T-cell (primary cell): ENCODE measurements at regions of chr3 and their contacts with region 1.

Region 1: GRCh38 chr3:33113772-33114621 is at the start of gene CRTAP:
- DNase-seq: peak; percentile 65 to 91 (median 77)
- ATAC-seq: peak; percentile 86 to 88 (median 88)
- H3K4me3 ChIP-seq: peak within 1 kb of the TSS; percentile 70 to 80
- H3K4me3 Mint-ChIP-seq: peak within 1 kb of the TSS; percentile 81 to 87 (median 83)
- H3K27ac ChIP-seq: peak within 1 kb of the TSS; percentile 62
- H3K27ac Mint-ChIP-seq: peak within 1 kb of the TSS; percentile 85 to 91
- H3K4me1 ChIP-seq: peaks cover 5 to 18% of the 10 kb centered on the region in 2 experiments
- H3K4me1 Mint-ChIP-seq: peaks cover 36 to 56% (median 53%) of the 10 kb centered on the region in 3 donors
- H3K27me3 ChIP-seq: no peaks in the 10 kb centered on the region
- H3K27me3 Mint-ChIP-seq: no peaks in the 10 kb centered on the region
- total RNA-seq, gene CRTAP: 27.8 to 65.7 (median 52.4) TPM

Region 2: DNA sequence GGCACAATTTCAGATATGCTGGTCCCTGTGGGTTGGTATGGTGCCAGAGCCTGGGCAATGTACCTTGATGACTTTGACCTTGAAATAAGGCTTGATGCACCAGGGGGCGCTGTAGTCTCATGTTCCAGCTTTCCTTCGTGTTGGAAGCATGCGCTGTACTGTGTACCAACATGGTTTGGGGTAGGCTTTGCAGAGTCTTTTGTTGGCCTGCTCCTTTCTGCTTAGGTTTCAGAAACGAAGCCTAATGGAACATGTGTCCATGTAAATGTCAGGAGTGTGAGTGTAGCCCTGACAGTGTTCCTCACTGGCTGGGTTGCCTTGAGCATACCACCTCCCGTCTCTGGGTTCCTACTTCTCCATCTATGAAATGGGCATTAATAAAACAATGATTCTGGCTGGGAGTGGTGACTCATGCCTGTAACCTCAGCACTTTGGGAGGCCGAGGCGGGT is 166.2 kb before region 1 on chr3:
- CTCF ChIA-PET with region 1: interaction called, 3 to 10 read pairs
- POLR2A ChIA-PET with region 1: interaction called in 1 of 2 experiments, 8 read pairs
- DNase-seq: peak; percentile 65 to 96 (median 85)
- ATAC-seq: peak; percentile 68 to 76 (median 74)
- H3K4me3 ChIP-seq: no peak overlapping the region
- H3K4me3 Mint-ChIP-seq: no peak overlapping the region
- H3K27ac ChIP-seq: no peak overlapping the region
- H3K27ac Mint-ChIP-seq: peak overlapping the region in 1 of 2 donors; percentile 28
- H3K4me1 ChIP-seq: peaks cover 7 to 28% of the 10 kb centered on the region in 2 experiments
- H3K4me1 Mint-ChIP-seq: peaks cover 30 to 42% (median 37%) of the 10 kb centered on the region in 3 donors
- H3K27me3 ChIP-seq: peaks cover 0 to 3% of the 10 kb centered on the region in 2 experiments
- H3K27me3 Mint-ChIP-seq: no peaks in the 10 kb centered on the region

Region 3: GRCh38 chr3:33131331-33132018 is 17.5 kb after region 1 on chr3:
- CTCF ChIA-PET with region 1: interaction called, 4 to 12 read pairs
- POLR2A ChIA-PET with region 1: interaction called, 3 to 5 read pairs
- DNase-seq: peak in 15 of 35 experiments; percentile 6 to 64 (median 18)
- ATAC-seq: peak in 3 of 4 experiments; percentile 58 to 72 (median 63)
- H3K4me3 ChIP-seq: no peak overlapping the region
- H3K4me3 Mint-ChIP-seq: no peak overlapping the region
- H3K27ac ChIP-seq: no peak overlapping the region
- H3K27ac Mint-ChIP-seq: no peak overlapping the region
- H3K4me1 ChIP-seq: peaks cover 0 to 2% of the 10 kb centered on the region in 2 experiments
- H3K4me1 Mint-ChIP-seq: peaks cover 0 to 7% (median 4%) of the 10 kb centered on the region in 3 donors
- H3K27me3 ChIP-seq: no peaks in the 10 kb centered on the region
- H3K27me3 Mint-ChIP-seq: no peaks in the 10 kb centered on the region

Region 4: DNA sequence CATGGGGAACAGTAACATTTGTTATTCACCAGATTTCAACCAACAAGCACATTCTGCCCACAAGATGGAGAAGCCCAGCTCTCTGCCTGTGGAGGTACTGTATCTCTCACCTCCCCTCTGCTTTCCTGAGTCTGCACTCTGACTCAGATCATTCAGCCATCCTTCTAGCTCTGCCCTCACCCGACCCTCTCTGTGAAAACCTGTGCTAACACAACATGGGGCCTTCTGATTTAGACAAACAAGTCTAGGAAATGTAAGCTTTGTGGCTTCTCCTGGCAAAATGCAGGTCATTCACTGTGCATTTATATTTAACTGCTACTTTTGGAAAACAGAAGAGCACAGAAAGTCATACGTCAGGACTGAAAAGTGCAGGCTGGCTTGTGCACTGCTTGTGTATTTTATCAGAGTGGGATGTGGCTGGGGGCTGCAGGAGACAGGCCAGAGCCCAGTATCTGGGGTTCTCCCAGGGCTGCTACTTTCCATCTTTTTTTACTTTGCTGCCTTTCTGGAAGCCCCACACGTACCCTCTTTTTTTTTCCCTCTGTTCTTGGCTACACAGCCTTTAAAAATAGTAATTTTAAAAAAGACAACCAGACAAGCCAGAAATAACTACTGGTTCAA is 53.8 kb after region 1 on chr3:
- CTCF ChIA-PET with region 1: no interaction called
- POLR2A ChIA-PET with region 1: no interaction called
- DNase-seq: no peak
- ATAC-seq: no peak
- H3K4me3 ChIP-seq: no peak overlapping the region
- H3K4me3 Mint-ChIP-seq: no peak overlapping the region
- H3K27ac ChIP-seq: no peak overlapping the region
- H3K27ac Mint-ChIP-seq: no peak overlapping the region
- H3K4me1 ChIP-seq: no peaks in the 10 kb centered on the region
- H3K4me1 Mint-ChIP-seq: peaks cover 7 to 9% (median 8%) of the 10 kb centered on the region in 3 donors
- H3K27me3 ChIP-seq: no peaks in the 10 kb centered on the region
- H3K27me3 Mint-ChIP-seq: peaks cover 0 to 2% of the 10 kb centered on the region in 2 donors

Region 5: GRCh38 chr3:33233884-33234283 is 119.9 kb after region 1 on chr3:
- CTCF ChIA-PET with region 1: no interaction called
- POLR2A ChIA-PET with region 1: no interaction called
- DNase-seq: no peak
- ATAC-seq: no peak
- H3K4me3 ChIP-seq: no peak overlapping the region
- H3K4me3 Mint-ChIP-seq: no peak overlapping the region
- H3K27ac ChIP-seq: no peak overlapping the region
- H3K27ac Mint-ChIP-seq: peak overlapping the region in 1 of 2 donors; percentile 20
- H3K4me1 ChIP-seq: no peaks in the 10 kb centered on the region
- H3K4me1 Mint-ChIP-seq: no peaks in the 10 kb centered on the region
- H3K27me3 ChIP-seq: peaks cover 0 to 8% of the 10 kb centered on the region in 2 experiments
- H3K27me3 Mint-ChIP-seq: peaks cover 26% of the 10 kb centered on the region in 2 donors